ENCODE measurements at regions of chr16 and their contacts with region 1.

Region 1: GRCh38 chr16:66740010-66740409 is 11.4 kb downstream of the DYNC1LI2 start:
- DNase-seq: no peak
- ATAC-seq: 0 out of 2 replicates have a peak, but pooled peaks have one; percentile 56
- H3K4me3 ChIP-seq: no peak overlapping the region
- H3K27ac ChIP-seq: no peak overlapping the region
- H3K4me1 ChIP-seq: peaks cover 5% of the 10 kb centered on the region; the same call in 1 of the 2 replicates
- H3K27me3 ChIP-seq: no peaks in the 10 kb centered on the region
- CTCF ChIP-seq: peak; percentile 73

Region 2: DNA sequence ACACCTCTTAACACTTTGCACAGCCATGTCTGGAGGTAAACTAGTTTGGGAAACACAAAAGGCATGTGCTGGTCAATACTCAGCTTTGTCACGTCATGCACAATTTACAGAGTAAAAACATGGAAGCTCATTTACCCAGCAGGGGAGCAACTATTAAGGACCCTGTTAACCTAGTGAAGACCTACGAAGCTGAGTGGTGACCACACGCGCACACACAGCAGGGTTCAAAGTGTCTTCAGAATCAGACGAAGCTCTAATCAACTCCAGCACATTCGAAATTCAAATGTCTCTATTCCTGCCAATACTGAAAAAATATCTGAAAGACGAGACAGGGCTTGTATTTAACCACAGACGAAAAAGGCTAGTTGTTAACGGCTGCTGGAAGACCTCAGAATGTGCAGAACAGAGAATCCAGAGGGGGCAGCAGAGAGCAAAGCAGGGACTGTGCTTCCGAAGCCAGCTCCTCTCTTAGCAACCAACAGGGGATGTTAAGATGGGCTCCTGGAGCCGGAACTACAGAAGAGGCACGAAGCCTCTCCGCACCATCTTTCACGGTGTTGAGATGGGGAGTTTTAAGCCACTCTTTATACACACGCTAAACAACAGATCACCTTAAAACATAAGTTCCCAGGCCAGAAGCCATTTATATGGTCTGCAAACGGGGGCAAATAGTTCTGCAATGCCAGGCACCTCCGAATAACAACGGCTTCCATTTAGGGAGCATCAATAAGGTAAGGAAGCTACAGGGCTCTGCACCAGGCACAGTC is 89.1 kb before region 1 on chr16:
- CTCF ChIA-PET with region 1: interaction called, 3 read pairs
- POLR2A ChIA-PET with region 1: interaction called, 10 read pairs
- in situ Hi-C with region 1: no loop called
- intact Hi-C with region 1: no loop called
- DNase-seq: peak; percentile 68
- ATAC-seq: peak; percentile 98
- H3K4me3 ChIP-seq: peak overlapping the region; percentile 22 to 49; a peak in 3 of 4 replicates
- H3K27ac ChIP-seq: peak overlapping the region; percentile 18; the same call in 1 of the 2 replicates
- H3K4me1 ChIP-seq: peaks cover 7% of the 10 kb centered on the region; the same call in 1 of the 2 replicates
- H3K27me3 ChIP-seq: no peaks in the 10 kb centered on the region
- CTCF ChIP-seq: peak; percentile 93

Region 3: GRCh38 chr16:66774981-66775380 is 35.0 kb after region 1 on chr16:
- CTCF ChIA-PET with region 1: no interaction called
- POLR2A ChIA-PET with region 1: interaction called, 13 read pairs
- in situ Hi-C with region 1: no loop called
- intact Hi-C with region 1: no loop called
- DNase-seq: no peak
- ATAC-seq: no peak
- H3K4me3 ChIP-seq: no peak overlapping the region
- H3K27ac ChIP-seq: no peak overlapping the region
- H3K4me1 ChIP-seq: no peaks in the 10 kb centered on the region
- H3K27me3 ChIP-seq: no peaks in the 10 kb centered on the region
- CTCF ChIP-seq: no peak